ENCODE measurements at regions of chr14 and their contacts with region 1.

Region 1: GRCh38 chr14:80055667-80056496 is 155.4 kb downstream of the DIO2 start:
- DNase-seq: peak; percentile 64
- H3K4me3 Mint-ChIP-seq: no peak overlapping the region
- H3K27ac Mint-ChIP-seq: no peak overlapping the region
- H3K4me1 Mint-ChIP-seq: peaks cover 5% of the 10 kb centered on the region
- H3K27me3 Mint-ChIP-seq: no peaks in the 10 kb centered on the region
- CTCF ChIP-seq: peak; percentile 82

Region 2: DNA sequence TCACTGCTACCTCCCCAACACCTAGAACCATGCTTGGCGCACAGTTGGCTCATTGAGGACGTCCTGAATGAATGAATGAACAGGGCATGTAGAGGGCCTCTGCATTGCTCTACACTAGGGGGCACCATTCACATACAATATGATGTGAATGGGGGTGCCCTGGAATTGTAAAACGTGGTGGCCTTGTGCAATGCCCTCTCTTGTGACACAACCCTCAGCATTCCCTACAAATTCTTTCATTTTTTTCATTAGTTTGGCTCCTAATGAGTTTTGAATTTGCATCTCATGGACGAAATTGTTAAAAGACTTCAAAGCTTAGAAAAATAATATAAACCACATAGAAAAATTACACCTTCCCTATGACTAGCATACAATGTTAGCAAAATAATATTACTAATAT is 157.7 kb after region 1 on chr14:
- CTCF ChIA-PET with region 1: interaction called, 9 read pairs
- POLR2A ChIA-PET with region 1: no interaction called
- intact Hi-C with region 1: loop called (anchors 1 kb)
- DNase-seq: peak; percentile 83
- H3K4me3 Mint-ChIP-seq: no peak overlapping the region
- H3K27ac Mint-ChIP-seq: no peak overlapping the region
- H3K4me1 Mint-ChIP-seq: peaks cover 11% of the 10 kb centered on the region
- H3K27me3 Mint-ChIP-seq: no peaks in the 10 kb centered on the region
- CTCF ChIP-seq: peak; percentile 79

Region 3: DNA sequence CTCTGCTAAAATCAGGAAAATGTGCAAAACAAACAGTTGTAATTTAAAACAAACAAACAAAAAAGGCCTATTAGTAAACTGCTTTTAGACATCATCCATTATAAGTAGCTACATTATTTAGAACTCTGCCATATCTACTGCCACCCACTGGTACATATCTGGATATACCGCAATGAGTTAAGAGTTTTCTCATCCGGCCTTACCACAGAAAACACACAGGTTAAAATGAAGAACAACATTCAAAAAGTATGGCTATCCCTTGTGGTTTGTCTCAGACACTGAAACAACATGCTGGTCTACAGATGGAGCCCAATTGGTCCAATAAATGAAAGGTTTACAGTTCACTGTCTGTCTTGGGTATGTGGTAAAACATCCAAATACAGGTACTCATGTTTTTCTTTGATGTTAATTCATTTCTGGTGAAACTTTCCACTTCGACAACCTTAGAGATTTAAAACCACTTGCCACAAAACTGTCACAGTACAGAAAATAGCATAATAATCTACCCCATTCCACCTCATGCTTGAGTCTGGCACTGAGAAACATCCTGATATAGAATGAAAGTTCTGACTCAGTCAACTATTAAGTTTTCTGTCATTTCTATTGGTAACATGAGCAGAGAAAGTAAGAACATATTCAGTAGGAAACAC is 531.3 kb after region 1 on chr14:
- CTCF ChIA-PET with region 1: interaction called, 45 read pairs
- POLR2A ChIA-PET with region 1: interaction called, 3 read pairs
- intact Hi-C with region 1: loop called (anchors 1 kb)
- DNase-seq: peak; percentile 46
- H3K4me3 Mint-ChIP-seq: no peak overlapping the region
- H3K27ac Mint-ChIP-seq: peak overlapping the region; percentile 74
- H3K4me1 Mint-ChIP-seq: peaks cover 46% of the 10 kb centered on the region
- H3K27me3 Mint-ChIP-seq: no peaks in the 10 kb centered on the region
- CTCF ChIP-seq: peak; percentile 46

Region 4: DNA sequence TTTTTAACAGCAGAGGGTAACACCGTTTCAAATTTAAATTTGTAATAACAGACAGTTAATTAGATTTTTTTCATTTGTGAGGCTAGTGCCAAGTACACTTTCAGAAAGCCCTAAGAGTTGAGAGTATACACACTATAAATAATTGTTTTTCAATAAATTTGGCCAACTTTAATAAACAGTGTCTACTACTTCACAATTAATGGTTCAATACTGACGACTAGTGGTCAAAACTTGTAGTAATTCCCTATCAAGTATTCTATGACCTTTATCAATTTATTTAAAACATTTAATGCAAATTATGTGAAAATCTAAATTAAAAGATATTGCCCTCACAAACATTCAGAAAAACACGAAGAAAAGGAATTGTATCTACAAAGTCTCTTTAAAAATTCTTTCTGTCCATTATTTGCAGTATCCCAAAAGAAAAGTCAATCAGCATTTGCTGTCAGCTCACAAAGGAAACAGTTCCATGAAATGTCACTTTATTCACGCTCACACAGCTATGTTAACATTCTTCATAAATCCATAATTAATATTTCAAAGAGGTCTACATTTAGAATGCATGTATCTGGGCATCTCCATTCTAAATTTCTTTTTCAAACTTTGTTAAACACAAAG is 794.4 kb after region 1 on chr14:
- CTCF ChIA-PET with region 1: interaction called, 52 read pairs
- POLR2A ChIA-PET with region 1: no interaction called
- intact Hi-C with region 1: loop called (anchors 1 kb)
- DNase-seq: peak; percentile 49
- H3K4me3 Mint-ChIP-seq: no peak overlapping the region
- H3K27ac Mint-ChIP-seq: no peak overlapping the region
- H3K4me1 Mint-ChIP-seq: no peaks in the 10 kb centered on the region
- H3K27me3 Mint-ChIP-seq: no peaks in the 10 kb centered on the region
- CTCF ChIP-seq: peak; percentile 70

Region 5: DNA sequence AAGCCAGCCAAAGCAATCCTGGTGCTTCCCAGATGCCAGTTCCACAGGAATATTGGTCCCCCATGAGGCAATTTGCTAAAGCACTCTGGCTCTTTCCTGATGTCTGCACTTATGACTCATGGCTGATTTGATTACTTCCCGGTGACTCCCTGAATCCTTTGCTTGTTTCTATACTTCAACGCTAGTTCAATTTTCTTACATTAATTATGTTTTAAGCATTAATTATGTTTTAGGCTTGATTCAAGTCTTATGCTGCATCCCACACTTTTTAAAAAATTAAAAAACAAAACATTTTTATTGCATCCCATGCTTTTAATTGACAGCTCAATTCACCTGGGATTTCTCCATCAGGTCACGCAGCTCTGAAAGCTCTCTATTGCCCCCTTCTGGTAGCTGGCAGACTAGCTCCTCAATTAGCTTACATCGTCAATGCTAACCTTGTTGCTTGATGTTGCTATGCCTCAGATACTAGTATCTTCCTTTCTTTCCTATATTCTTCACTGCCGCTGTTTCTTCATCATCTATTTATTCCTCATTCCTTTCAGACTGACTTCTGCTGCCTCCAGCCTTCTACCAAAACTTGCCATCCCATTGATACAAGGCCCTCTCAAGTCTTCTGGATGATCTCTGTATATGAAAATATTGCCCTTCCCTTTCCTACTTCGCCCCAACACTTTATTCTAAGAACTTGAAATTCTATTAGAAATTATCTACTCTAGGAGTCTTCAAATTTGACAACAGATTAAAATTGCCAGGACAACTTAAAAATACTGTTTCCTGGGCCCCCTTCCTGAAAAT is 931.6 kb after region 1 on chr14:
- CTCF ChIA-PET with region 1: interaction called, 3 read pairs
- POLR2A ChIA-PET with region 1: no interaction called
- intact Hi-C with region 1: loop called (anchors 1 kb)
- DNase-seq: peak; percentile 83
- H3K4me3 Mint-ChIP-seq: no peak overlapping the region
- H3K27ac Mint-ChIP-seq: no peak overlapping the region
- H3K4me1 Mint-ChIP-seq: no peaks in the 10 kb centered on the region
- H3K27me3 Mint-ChIP-seq: peaks cover 21% of the 10 kb centered on the region
- CTCF ChIP-seq: peak; percentile 95

Measured in MCF 10A (cell line).